Heart left ventricle (tissue), 16 donors: ENCODE measurements at regions of chr5 and their contacts with region 1.

Region 1: GRCh38 chr5:154749491-154749890 is 5.7 kb upstream of the LARP1 start:
- DNase-seq: no peak
- ATAC-seq: no peak
- H3K4me3 ChIP-seq: no peak overlapping the region
- H3K27ac ChIP-seq: no peak overlapping the region
- H3K4me1 ChIP-seq: peaks cover 0 to 30% (median 14%) of the 10 kb centered on the region in 12 donors
- H3K27me3 ChIP-seq: no peaks in the 10 kb centered on the region
- CTCF ChIP-seq: no peak
- POLR2A ChIP-seq: no peak

Region 2: DNA sequence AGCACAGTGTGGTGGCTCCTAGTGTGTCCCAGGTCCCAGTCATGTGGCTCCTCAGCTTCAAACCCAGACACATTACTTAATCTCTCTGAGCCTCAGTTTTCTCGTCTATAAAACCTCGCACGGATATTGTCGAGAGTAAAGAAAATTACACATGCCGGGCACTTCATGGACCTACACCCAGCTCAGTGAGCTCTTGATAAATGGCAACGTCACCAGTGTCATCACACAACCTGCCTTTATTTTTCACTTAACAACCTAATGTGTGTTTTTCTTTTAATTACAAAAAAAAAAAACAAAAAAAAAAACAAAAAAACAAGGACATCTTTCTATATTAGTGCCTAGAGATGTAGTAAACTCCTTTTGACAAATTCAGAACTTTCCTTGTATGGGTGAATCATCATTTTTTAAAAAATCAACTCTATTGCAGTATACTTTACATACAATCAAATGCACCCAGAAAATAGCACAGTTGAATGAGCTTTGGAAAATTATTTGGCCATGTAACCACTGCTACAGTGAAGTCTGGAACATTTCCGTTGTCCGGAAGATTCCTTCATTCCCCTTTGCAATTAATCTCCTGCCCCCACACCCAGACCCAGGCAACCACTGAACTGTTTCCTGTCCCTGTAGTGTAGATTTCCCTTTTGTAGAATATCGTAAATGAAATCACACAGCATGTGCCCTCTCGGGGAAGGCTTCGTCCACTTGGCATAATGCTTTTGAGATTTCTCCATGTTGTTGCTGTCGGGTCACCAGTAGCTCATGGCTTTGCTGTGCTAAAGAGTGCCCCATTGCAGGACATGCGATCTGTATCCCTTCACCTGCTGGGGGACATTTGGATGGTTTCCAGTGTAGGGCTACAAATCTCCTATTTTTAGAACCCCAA is 94.8 kb before region 1 on chr5:
- intact Hi-C with region 1: loop called in 2 of 10 experiments (anchors 5 to 10 kb)
- DNase-seq: no peak
- ATAC-seq: peak in 3 of 4 donors; percentile 30 to 54 (median 46)
- H3K4me3 ChIP-seq: peak overlapping the region in 8 of 12 donors; percentile 3 to 31 (median 13)
- H3K27ac ChIP-seq: peak overlapping the region in 10 of 12 donors; percentile 9 to 69 (median 42)
- H3K4me1 ChIP-seq: peaks cover 0 to 23% (median 16%) of the 10 kb centered on the region in 12 donors
- H3K27me3 ChIP-seq: no peaks in the 10 kb centered on the region
- CTCF ChIP-seq: no peak
- POLR2A ChIP-seq: no peak